Stomach (tissue), 19 donors: ENCODE measurements at regions of chr17 and their contacts with region 1.

Region 1: DNA sequence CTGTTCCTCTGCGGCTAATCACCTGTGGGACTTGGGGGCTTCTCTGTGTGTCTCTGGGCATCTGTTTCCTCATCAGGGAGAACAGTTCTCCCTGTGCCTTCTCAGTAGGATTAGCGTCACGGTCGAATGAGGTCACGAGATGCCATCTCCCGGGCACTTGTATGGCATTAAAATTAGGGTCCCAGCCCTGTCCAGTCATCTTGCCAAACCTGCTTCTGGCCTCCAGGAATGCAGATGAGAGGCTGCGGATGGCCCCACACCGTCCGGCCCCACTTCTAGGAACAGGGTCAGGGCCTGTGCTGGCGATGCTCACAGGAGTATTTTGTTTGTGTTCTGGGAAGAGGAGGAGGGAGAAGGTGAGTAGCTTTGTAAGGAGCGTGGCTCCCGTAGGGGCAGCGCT is 58.5 kb downstream of the OR1D5 start:
- DNase-seq: no peak
- H3K4me3 ChIP-seq: peak overlapping the region in 1 of 4 donors; percentile 14
- H3K27ac ChIP-seq: peak overlapping the region; percentile 87 to 94 (median 88)
- H3K4me1 ChIP-seq: peaks cover 34 to 44% (median 40%) of the 10 kb centered on the region in 4 donors
- H3K27me3 ChIP-seq: no peaks in the 10 kb centered on the region
- CTCF ChIP-seq: no peak
- EP300 ChIP-seq: peak; percentile 87
- POLR2A ChIP-seq: no peak

Region 2: DNA sequence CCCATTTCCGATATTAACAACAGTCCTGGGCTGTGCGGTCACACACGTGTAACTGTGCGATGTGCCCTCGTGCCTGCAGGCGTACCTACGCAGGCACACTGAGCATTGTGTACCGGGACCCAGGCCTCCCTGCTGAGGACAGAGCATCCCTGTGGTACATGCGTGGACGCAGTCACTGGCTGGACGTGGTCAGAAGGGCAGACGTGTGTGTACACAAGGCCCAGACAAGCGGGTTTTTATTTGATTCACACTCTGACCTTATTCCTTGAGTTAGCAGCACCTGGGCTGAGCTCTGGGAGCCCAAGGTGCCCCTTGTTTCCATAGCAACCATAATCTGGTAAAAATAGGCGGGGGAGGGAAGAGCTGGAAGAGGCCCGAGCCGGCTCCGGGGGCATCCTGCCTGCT is 189.1 kb before region 1 on chr17:
- intact Hi-C with region 1: no loop called
- DNase-seq: peak; percentile 44 to 78
- H3K4me3 ChIP-seq: no peak overlapping the region
- H3K27ac ChIP-seq: no peak overlapping the region
- H3K4me1 ChIP-seq: peaks cover 0 to 24% (median 8%) of the 10 kb centered on the region in 4 donors
- H3K27me3 ChIP-seq: peaks cover 0 to 19% (median 0%) of the 10 kb centered on the region in 3 donors
- CTCF ChIP-seq: no peak
- EP300 ChIP-seq: no peak
- POLR2A ChIP-seq: no peak

Region 3: DNA sequence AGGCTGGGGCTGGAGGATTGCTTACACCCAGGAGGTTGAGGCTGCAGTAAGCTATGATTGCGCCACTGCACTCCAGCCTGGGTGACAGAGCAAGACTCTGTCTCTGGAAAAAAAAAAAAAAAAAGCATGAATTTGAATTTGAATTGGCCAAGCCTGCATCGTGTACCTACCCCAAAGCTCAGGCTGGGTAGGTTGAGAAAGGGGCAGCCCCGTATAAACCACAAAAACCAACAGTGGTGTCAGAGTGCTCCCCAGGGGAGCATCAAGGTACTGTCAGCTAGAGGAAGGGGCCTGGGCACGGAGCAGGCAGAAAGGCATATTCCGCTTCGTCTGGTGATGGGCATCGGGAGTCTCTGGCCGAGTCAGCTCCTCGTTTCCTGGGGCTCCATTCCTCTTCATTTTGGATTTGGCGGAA is 167.8 kb before region 1 on chr17:
- intact Hi-C with region 1: loop called (anchors 5 kb)
- DNase-seq: no peak
- H3K4me3 ChIP-seq: no peak overlapping the region
- H3K27ac ChIP-seq: no peak overlapping the region
- H3K4me1 ChIP-seq: peaks cover 0 to 11% (median 0%) of the 10 kb centered on the region in 4 donors
- H3K27me3 ChIP-seq: no peaks in the 10 kb centered on the region
- CTCF ChIP-seq: no peak
- EP300 ChIP-seq: no peak
- POLR2A ChIP-seq: no peak

Region 4: DNA sequence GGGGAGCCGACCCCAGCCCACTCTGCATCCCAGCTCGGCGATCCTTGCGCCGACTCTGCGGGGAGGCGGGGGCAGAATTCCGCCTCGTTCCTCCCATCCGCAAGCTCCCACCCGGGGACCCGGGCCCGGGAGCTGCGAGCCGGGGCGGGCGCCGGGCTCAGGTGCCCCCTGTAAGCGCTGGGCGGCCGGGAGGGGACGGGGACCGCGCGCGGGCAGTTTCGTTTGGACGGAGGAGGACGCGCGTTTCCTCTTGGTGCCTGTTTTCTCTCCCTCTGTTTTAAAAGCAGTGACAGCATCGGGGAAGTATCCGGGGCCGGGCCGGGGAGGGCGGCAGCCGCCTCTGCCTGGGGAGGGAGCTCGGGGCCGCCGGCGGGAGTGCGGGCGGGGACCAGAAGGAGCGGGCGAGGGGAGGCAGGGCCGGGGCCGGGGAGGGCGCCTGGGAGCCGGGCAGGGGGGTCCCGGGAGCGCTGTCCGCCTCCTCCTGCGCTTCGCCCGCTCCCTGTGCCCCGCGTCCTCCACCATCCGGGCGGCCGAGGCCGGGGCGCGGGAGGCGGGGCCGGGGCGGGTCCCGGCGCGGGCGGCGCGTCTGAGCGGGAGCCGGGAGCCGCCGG is 151.7 kb before region 1 on chr17:
- intact Hi-C with region 1: loop called (anchors 5 kb)
- DNase-seq: peak; percentile 68 to 82
- H3K4me3 ChIP-seq: peak overlapping the region; percentile 63 to 74 (median 66)
- H3K27ac ChIP-seq: peak overlapping the region; percentile 64 to 94 (median 89)
- H3K4me1 ChIP-seq: peaks cover 30 to 58% (median 35%) of the 10 kb centered on the region in 4 donors
- H3K27me3 ChIP-seq: peaks cover 0 to 40% (median 12%) of the 10 kb centered on the region in 3 donors
- CTCF ChIP-seq: no peak
- EP300 ChIP-seq: no peak
- POLR2A ChIP-seq: no peak